B cell (primary cell): ENCODE measurements at regions of chr7 and their contacts with region 1.

Region 1: GRCh38 chr7:114392686-114393085 is 21.9 kb upstream of the FOXP2 start:
- DNase-seq: no peak
- ATAC-seq: no peak
- H3K4me3 ChIP-seq: no peak overlapping the region
- H3K4me3 Mint-ChIP-seq: no peak overlapping the region
- H3K27ac ChIP-seq: no peak overlapping the region
- H3K27ac Mint-ChIP-seq: no peak overlapping the region
- H3K4me1 ChIP-seq: no peaks in the 10 kb centered on the region
- H3K4me1 Mint-ChIP-seq: no peaks in the 10 kb centered on the region
- H3K27me3 ChIP-seq: no peaks in the 10 kb centered on the region
- H3K27me3 Mint-ChIP-seq: no peaks in the 10 kb centered on the region
- CTCF ChIP-seq: no peak

Region 2: GRCh38 chr7:114405427-114405826 is 12.7 kb after region 1 on chr7:
- CTCF ChIA-PET with region 1: no interaction called
- POLR2A ChIA-PET with region 1: no interaction called
- intact Hi-C with region 1: loop called (anchors 1 kb)
- DNase-seq: no peak
- ATAC-seq: no peak
- H3K4me3 ChIP-seq: no peak overlapping the region
- H3K4me3 Mint-ChIP-seq: no peak overlapping the region
- H3K27ac ChIP-seq: no peak overlapping the region
- H3K27ac Mint-ChIP-seq: no peak overlapping the region
- H3K4me1 ChIP-seq: no peaks in the 10 kb centered on the region
- H3K4me1 Mint-ChIP-seq: no peaks in the 10 kb centered on the region
- H3K27me3 ChIP-seq: no peaks in the 10 kb centered on the region
- H3K27me3 Mint-ChIP-seq: no peaks in the 10 kb centered on the region
- CTCF ChIP-seq: no peak

Region 3: GRCh38 chr7:114922016-114922651 is 529.4 kb after region 1 on chr7 and contains the start of gene MDFIC:
- CTCF ChIA-PET with region 1: no interaction called
- POLR2A ChIA-PET with region 1: no interaction called
- intact Hi-C with region 1: no loop called
- DNase-seq: no peak
- ATAC-seq: peak; percentile 62
- H3K4me3 ChIP-seq: peak within 1 kb of the TSS; percentile 57 to 90 (median 88)
- H3K4me3 Mint-ChIP-seq: peak within 1 kb of the TSS; percentile 99
- H3K27ac ChIP-seq: peak within 1 kb of the TSS; percentile 82 to 91
- H3K27ac Mint-ChIP-seq: peak within 1 kb of the TSS; percentile 98
- H3K4me1 ChIP-seq: peaks cover 33 to 36% of the 10 kb centered on the region in 2 donors
- H3K4me1 Mint-ChIP-seq: peaks cover 70% of the 10 kb centered on the region
- H3K27me3 ChIP-seq: no peaks in the 10 kb centered on the region
- H3K27me3 Mint-ChIP-seq: no peaks in the 10 kb centered on the region
- CTCF ChIP-seq: no peak
- total RNA-seq, gene MDFIC: 56.0 and 66.1 TPM in 2 replicates